HepG2 (cell line): ENCODE measurements at regions of chr14 and their contacts with region 1.

Region 1: GRCh38 chr14:94451091-94451771 is 1.4 kb downstream of the SERPINA11 start:
- DNase-seq: peak; percentile 85
- ATAC-seq: peak; percentile 83
- H3K4me3 ChIP-seq: peak overlapping the region; percentile 63 to 79 (median 73)
- H3K27ac ChIP-seq: peak overlapping the region; percentile 99
- H3K4me1 ChIP-seq: peaks cover 95% of the 10 kb centered on the region
- H3K27me3 ChIP-seq: no peaks in the 10 kb centered on the region; a peak in 1 of 5 replicates
- CTCF ChIP-seq: 0 out of 2 replicates have a peak, but pooled peaks have one; percentile 14
- EP300 ChIP-seq: peak in 1 of 2 experiments; percentile 83; a peak in 2 of 4 replicates
- POLR2A ChIP-seq: peak; percentile 25 to 60; a peak in 2 of 4 replicates
- RAD21 ChIP-seq: peak; percentile 9; the same call in 1 of the 2 replicates

Region 2: DNA sequence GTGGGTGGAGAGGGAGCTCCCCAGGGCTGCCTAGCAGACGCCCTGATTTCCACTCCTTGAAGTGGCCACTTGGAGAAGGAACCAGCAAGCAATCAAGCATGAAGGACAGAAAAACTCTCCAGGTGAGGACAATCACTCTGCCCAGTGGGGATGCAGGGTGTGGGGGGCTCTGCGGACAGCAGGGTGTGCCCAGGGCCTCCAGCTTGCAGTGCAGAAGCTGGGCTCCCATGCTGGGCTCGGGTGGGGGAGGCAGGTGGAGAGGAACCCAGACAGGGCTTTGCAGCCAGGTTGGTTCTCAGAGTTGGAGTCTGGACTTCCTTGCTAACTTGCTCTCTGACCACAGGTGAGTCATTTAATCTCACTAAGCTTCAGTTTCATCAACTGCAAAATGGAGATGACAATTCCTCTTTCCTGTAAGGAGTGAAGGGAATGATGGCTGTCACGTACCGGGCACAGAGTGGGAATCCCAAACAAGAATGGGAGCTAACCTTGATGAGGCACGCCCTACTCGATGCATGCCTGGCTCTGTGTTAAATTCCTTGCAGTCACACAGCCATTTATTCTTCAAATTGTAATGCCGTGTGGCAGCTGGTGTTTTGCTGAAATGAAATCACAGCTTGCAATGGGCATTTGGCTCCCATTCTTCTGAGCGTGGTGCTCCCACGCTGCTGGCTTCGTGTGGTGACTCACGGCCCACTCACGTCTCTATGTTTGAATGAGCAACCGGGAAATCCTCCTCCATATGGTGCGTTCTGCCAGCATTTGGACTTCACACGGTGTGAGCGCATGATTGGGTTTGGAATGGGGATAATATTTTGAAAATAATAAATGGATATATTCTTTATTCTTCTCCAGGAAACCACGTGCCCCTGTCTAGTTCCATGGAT is 738.1 kb before region 1 on chr14:
- CTCF ChIA-PET with region 1: no interaction called
- POLR2A ChIA-PET with region 1: no interaction called
- in situ Hi-C with region 1: no loop called
- intact Hi-C with region 1: no loop called
- DNase-seq: no peak
- ATAC-seq: no peak
- H3K4me3 ChIP-seq: no peak overlapping the region
- H3K27ac ChIP-seq: no peak overlapping the region
- H3K4me1 ChIP-seq: peaks cover 13% of the 10 kb centered on the region
- H3K27me3 ChIP-seq: peaks cover 0 to 22% of the 10 kb centered on the region in 2 experiments; a peak in 3 of 5 replicates
- CTCF ChIP-seq: no peak
- EP300 ChIP-seq: no peak
- POLR2A ChIP-seq: no peak
- RAD21 ChIP-seq: no peak

Region 3: DNA sequence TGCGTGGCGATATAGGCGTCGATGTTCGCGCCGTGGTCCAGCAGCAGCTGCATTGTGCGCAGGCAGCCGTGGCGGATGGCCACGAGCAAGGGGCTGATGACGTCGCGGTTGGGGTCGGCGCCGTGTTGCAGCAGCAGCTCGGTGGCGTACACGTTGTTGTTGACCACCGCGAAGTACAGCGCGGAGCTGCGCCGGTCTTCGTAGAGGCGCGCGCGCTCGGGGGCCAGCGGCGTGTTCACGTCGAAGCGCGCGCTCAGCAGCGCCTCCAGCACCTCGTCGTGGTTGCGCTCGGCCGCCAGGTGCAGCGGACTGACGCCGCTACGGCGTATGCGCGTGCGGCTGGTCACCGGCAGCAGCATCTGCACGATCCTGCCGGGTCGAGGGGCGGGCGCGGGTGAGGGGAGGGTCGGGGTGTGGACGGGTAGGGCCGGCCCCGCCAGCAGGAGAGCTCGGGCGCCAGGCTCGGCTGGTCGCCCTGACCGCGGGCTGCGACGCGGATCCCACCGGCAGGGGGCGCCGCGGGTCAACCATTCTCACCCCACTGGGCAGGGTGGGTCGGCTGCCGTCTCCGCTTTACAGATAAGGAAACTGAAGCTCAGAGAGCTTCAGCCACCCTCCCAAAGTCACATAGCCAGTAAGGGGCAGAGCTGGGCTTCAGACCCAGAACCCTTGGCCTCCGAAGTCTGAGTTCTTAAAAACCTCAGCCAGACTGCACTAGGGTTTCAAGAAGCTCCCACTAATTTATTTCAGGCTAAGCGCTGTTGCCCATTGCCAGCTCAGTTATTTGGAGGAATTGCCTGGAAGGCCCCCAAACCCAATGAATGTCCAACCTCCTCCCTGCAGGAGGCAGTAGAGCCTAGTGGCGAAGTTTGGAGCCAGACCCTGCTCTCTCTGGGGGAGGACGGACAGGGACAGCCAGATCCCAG is 511.7 kb before region 1 on chr14:
- CTCF ChIA-PET with region 1: no interaction called
- POLR2A ChIA-PET with region 1: no interaction called
- in situ Hi-C with region 1: no loop called
- intact Hi-C with region 1: no loop called
- DNase-seq: no peak
- ATAC-seq: peak; percentile 91
- H3K4me3 ChIP-seq: no peak overlapping the region
- H3K27ac ChIP-seq: no peak overlapping the region
- H3K4me1 ChIP-seq: peaks cover 25% of the 10 kb centered on the region
- H3K27me3 ChIP-seq: no peaks in the 10 kb centered on the region; a peak in 1 of 5 replicates
- CTCF ChIP-seq: peak; percentile 92
- EP300 ChIP-seq: no peak
- POLR2A ChIP-seq: no peak
- RAD21 ChIP-seq: peak; percentile 97

Region 4: GRCh38 chr14:94407906-94408305 is 43.3 kb before region 1 on chr14:
- CTCF ChIA-PET with region 1: no interaction called
- POLR2A ChIA-PET with region 1: no interaction called
- in situ Hi-C with region 1: no loop called
- intact Hi-C with region 1: no loop called
- DNase-seq: no peak
- ATAC-seq: no peak
- H3K4me3 ChIP-seq: no peak overlapping the region
- H3K27ac ChIP-seq: no peak overlapping the region
- H3K4me1 ChIP-seq: peaks cover 79% of the 10 kb centered on the region
- H3K27me3 ChIP-seq: no peaks in the 10 kb centered on the region
- CTCF ChIP-seq: no peak
- EP300 ChIP-seq: no peak
- POLR2A ChIP-seq: no peak
- RAD21 ChIP-seq: no peak

Region 5: DNA sequence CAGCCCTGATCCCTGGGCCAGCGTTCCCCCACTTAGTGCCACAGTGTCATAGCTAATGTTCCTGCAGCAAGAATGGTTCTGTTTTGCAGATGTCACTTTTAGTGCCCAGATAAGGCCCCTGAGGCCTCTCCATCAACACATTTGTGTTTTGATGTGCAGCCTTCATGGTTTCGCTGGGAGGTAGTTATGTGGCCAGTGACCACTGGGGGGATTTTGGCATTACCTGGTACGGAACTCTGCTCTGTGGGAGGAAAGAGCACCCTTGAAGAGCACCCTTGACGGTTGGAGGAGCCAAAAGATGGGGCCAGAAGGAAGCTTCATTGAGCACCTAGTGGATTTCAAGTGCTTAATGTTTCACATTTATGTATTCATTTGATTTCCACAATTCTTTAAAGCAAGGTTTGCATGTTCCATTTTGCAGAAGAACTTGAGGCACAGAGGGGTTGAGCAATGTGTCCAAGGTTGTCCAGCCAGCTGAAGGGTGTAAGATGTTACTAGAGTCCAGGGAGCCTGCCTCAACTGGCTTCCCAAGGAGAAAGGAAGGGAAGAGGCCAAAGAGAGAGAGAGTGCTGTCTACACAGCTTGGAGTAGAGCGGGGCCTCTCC is 11.7 kb before region 1 on chr14:
- CTCF ChIA-PET with region 1: interaction called, 3 read pairs
- POLR2A ChIA-PET with region 1: interaction called, 10 read pairs
- in situ Hi-C with region 1: no loop called
- intact Hi-C with region 1: no loop called
- DNase-seq: no peak
- ATAC-seq: peak; percentile 66
- H3K4me3 ChIP-seq: no peak overlapping the region
- H3K27ac ChIP-seq: no peak overlapping the region
- H3K4me1 ChIP-seq: peaks cover 19% of the 10 kb centered on the region
- H3K27me3 ChIP-seq: no peaks in the 10 kb centered on the region
- CTCF ChIP-seq: no peak
- EP300 ChIP-seq: no peak
- POLR2A ChIP-seq: peak in 1 of 2 experiments; percentile 35; a peak in 1 of 4 replicates
- RAD21 ChIP-seq: no peak

Region 6: GRCh38 chr14:94461526-94462218 is 10.4 kb after region 1 on chr14:
- CTCF ChIA-PET with region 1: interaction called, 6 read pairs
- POLR2A ChIA-PET with region 1: interaction called, 13 read pairs
- in situ Hi-C with region 1: no loop called
- intact Hi-C with region 1: no loop called
- DNase-seq: no peak
- ATAC-seq: no peak
- H3K4me3 ChIP-seq: no peak overlapping the region
- H3K27ac ChIP-seq: no peak overlapping the region
- H3K4me1 ChIP-seq: peaks cover 95% of the 10 kb centered on the region
- H3K27me3 ChIP-seq: no peaks in the 10 kb centered on the region
- CTCF ChIP-seq: no peak
- EP300 ChIP-seq: no peak
- POLR2A ChIP-seq: no peak
- RAD21 ChIP-seq: no peak

Region 7: DNA sequence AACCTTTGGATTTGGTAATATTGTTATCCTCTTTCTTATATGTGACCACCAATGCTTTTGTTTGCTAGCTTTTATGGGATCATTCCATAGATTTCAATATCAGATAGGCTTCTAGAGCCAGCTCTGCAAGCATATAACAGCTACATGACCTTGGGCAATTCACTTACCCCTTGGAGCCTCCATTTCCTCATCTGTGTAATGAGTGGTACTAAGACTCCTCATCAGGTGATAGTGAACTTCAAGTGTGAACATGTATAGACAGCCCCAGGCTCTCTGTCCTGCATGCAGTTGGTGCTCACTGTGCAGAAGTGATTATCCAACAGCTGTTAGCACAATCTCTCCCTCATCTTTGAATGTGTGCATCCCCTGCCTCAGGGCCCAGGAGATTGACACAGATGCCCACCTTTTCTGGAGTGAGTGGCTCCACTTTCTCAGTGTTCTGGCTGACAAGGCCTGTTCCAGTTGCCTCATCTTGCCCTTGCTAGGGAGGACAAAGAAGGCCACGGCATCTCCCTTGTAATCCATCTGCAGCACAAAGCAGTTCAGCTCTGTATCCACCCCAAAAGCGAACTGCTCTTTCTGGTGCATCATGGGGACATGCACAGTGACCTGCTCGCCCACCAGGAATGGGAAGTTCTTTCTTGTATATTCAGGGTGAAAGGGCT is 15.6 kb after region 1 on chr14:
- CTCF ChIA-PET with region 1: interaction called, 6 read pairs
- POLR2A ChIA-PET with region 1: interaction called, 13 read pairs
- in situ Hi-C with region 1: no loop called
- intact Hi-C with region 1: no loop called
- DNase-seq: no peak
- ATAC-seq: no peak
- H3K4me3 ChIP-seq: no peak overlapping the region
- H3K27ac ChIP-seq: no peak overlapping the region
- H3K4me1 ChIP-seq: peaks cover 78% of the 10 kb centered on the region
- H3K27me3 ChIP-seq: no peaks in the 10 kb centered on the region
- CTCF ChIP-seq: no peak
- EP300 ChIP-seq: no peak
- POLR2A ChIP-seq: no peak
- RAD21 ChIP-seq: no peak